Caco-2 (cell line): ENCODE measurements at regions of chr2 and their contacts with region 1.

Region 1: DNA sequence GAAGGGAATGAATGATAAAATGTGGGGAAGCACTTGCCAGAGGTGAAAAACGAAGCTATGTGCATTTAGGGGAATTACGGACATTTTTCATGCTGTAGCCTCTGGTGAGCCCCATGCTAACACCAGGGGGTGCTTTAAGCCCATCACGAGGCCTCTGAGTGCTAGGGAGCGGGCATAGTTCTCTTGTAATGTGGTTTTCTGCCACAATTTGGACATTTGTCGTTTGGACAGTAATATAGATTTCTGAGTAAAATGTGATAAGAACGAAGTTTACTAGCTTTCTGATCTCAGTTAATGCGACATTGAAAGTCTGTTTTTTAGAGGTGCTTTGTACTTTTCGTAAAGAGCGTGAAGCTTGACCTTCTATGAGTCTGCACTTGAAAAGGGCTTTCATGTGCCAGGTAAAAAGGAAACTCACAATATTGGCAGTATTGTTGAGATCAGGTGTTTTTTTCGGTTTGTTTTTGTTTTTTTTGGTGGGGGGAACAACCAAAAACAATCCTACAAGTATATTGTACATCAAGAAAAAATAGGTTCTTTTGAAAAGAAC is 50.6 kb downstream of the TRAF3IP1 start:
- DNase-seq: peak; percentile 66
- H3K4me3 ChIP-seq: no peak overlapping the region
- H3K4me3 Mint-ChIP-seq: no peak overlapping the region
- H3K27ac Mint-ChIP-seq: no peak overlapping the region
- H3K4me1 ChIP-seq: no peaks in the 10 kb centered on the region
- H3K4me1 Mint-ChIP-seq: no peaks in the 10 kb centered on the region
- H3K27me3 ChIP-seq: no peaks in the 10 kb centered on the region
- H3K27me3 Mint-ChIP-seq: no peaks in the 10 kb centered on the region
- CTCF ChIP-seq: peak; percentile 71

Region 2: GRCh38 chr2:238462782-238463396 is 92.0 kb after region 1 on chr2:
- CTCF ChIA-PET with region 1: no interaction called
- POLR2A ChIA-PET with region 1: no interaction called
- intact Hi-C with region 1: loop called (anchors 1 kb)
- DNase-seq: peak in 1 of 2 experiments; percentile 35
- H3K4me3 ChIP-seq: no peak overlapping the region
- H3K4me3 Mint-ChIP-seq: no peak overlapping the region
- H3K27ac Mint-ChIP-seq: no peak overlapping the region
- H3K4me1 ChIP-seq: no peaks in the 10 kb centered on the region
- H3K4me1 Mint-ChIP-seq: no peaks in the 10 kb centered on the region
- H3K27me3 ChIP-seq: no peaks in the 10 kb centered on the region
- H3K27me3 Mint-ChIP-seq: no peaks in the 10 kb centered on the region
- CTCF ChIP-seq: peak; percentile 42 to 44

Region 3: DNA sequence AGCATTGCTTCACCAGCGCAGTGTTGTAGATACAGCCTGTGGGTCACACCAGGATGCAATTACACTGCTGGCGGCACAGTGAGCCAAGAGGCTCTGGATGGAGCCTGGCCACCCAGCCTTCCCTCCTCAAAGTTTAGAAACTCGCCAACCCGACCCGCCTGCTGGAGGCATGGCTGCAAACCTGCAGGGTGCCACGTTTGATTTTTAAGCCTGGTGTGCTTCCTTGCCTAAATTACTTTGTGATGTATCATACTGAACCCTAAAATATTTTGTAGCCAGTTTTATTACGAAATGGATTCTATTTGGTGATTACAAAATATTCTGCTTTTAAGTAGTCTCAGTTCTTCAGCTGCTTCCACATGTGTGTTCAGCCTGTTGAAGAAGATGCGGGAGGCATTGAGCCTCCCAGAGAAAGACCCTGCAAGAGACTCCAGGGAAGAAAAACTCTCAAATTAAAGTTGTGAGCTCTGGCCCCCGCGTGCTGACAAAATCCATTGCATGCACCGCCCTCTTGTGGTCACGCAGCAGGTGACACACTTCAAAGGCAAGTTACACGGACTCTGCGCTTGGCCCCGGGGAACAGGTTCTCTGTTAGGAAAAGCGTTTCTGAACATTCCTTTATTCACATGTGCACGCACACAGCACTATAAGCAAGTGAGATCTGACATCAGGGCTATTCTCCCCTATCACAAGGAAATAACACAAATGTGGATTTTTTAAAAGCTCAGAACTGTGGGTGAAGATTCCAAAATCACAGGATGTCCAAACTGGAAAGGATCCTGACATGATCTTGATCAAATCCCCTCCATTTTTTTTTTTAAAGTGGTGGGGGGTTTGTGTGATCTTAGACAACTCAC is 414.0 kb after region 1 on chr2:
- CTCF ChIA-PET with region 1: no interaction called
- POLR2A ChIA-PET with region 1: no interaction called
- intact Hi-C with region 1: loop called (anchors 2 kb)
- DNase-seq: peak; percentile 46 to 47
- H3K4me3 ChIP-seq: no peak overlapping the region
- H3K4me3 Mint-ChIP-seq: no peak overlapping the region
- H3K27ac Mint-ChIP-seq: no peak overlapping the region
- H3K4me1 ChIP-seq: no peaks in the 10 kb centered on the region
- H3K4me1 Mint-ChIP-seq: no peaks in the 10 kb centered on the region
- H3K27me3 ChIP-seq: no peaks in the 10 kb centered on the region
- H3K27me3 Mint-ChIP-seq: peaks cover 4% of the 10 kb centered on the region
- CTCF ChIP-seq: peak; percentile 63 to 73